ENCODE measurements at regions of chr16 and their contacts with region 1.

Region 1: DNA sequence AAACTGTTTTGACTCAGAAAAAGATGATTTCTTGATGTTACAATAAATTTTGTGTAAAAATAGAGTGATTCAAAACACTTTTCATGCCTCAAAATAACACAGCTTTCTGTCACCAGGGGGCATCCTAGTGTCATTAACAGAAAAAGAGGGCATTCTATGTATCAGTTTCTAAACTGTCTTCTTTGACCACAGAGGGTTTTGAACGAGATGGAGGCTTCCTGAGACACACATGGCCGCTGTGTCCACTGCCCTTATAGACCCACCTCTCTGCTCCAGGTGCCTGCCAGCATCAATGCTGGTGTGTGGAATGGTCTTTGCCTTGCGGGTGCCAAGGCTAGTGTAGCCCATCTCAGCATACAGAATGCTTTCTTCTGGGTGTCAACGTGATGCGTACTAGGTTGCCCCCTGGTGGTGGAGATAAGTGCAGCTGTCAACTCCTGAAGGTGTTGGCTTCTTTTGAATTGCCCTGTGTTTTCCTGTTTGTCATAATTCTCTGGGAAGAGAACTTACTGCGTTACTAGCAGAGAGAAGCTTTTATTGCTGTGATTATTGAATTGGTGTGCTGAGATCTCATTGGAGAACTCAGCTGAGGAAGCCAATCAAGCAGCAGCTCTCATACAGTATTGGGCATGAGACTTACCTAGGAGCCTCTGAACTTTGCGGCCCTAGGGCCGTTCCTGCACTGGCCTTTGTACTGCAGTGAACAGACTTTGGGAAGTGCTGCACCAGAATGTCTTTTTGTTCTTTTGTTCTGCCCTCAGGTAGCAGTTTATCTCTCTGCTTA is 38.6 kb downstream of the USP10 start:
- DNase-seq: peak; percentile 82
- H3K4me3 Mint-ChIP-seq: peak overlapping the region; percentile 6
- H3K27ac Mint-ChIP-seq: peak overlapping the region; percentile 63
- H3K4me1 Mint-ChIP-seq: peaks cover 48% of the 10 kb centered on the region
- H3K27me3 Mint-ChIP-seq: no peaks in the 10 kb centered on the region

Region 2: GRCh38 chr16:84663433-84664101 is 74.9 kb before region 1 on chr16:
- CTCF ChIA-PET with region 1: interaction called, 10 read pairs
- POLR2A ChIA-PET with region 1: no interaction called
- intact Hi-C with region 1: no loop called
- DNase-seq: no peak
- H3K4me3 Mint-ChIP-seq: no peak overlapping the region
- H3K27ac Mint-ChIP-seq: no peak overlapping the region
- H3K4me1 Mint-ChIP-seq: peaks cover 1% of the 10 kb centered on the region
- H3K27me3 Mint-ChIP-seq: no peaks in the 10 kb centered on the region

Region 3: GRCh38 chr16:84692451-84693214 is 45.8 kb before region 1 on chr16:
- CTCF ChIA-PET with region 1: interaction called, 10 read pairs
- POLR2A ChIA-PET with region 1: no interaction called
- intact Hi-C with region 1: no loop called
- DNase-seq: no peak
- H3K4me3 Mint-ChIP-seq: no peak overlapping the region
- H3K27ac Mint-ChIP-seq: no peak overlapping the region
- H3K4me1 Mint-ChIP-seq: peaks cover 1% of the 10 kb centered on the region
- H3K27me3 Mint-ChIP-seq: peaks cover 3% of the 10 kb centered on the region

Region 4: GRCh38 chr16:84754353-84754856 is 16.0 kb after region 1 on chr16:
- CTCF ChIA-PET with region 1: interaction called, 141 read pairs
- POLR2A ChIA-PET with region 1: no interaction called
- intact Hi-C with region 1: loop called (anchors 1 kb)
- DNase-seq: peak; percentile 65
- H3K4me3 Mint-ChIP-seq: peak overlapping the region; percentile 36
- H3K27ac Mint-ChIP-seq: no peak overlapping the region
- H3K4me1 Mint-ChIP-seq: peaks cover 87% of the 10 kb centered on the region
- H3K27me3 Mint-ChIP-seq: no peaks in the 10 kb centered on the region

Region 5: DNA sequence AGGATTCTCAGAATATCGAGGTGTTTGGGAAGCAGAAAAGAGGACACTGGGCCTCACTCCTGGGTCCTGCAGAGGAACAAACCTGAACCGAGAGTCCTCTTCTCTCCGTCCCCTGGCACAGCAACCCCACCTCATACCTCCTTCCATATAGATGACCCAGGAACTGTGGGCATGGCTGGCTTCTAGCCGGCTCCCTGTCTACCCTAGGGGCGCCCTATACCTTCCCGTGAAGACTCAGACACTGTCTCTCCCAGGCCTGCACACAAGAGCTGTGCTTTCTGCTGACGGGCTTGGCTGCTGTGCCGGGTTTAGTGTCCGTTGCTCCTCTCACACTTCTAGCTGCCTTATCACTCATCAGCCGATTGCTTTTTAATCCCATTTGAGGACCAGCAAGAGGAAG is 34.9 kb after region 1 on chr16:
- CTCF ChIA-PET with region 1: interaction called, 15 read pairs
- POLR2A ChIA-PET with region 1: no interaction called
- intact Hi-C with region 1: no loop called
- DNase-seq: no peak
- H3K4me3 Mint-ChIP-seq: no peak overlapping the region
- H3K27ac Mint-ChIP-seq: no peak overlapping the region
- H3K4me1 Mint-ChIP-seq: peaks cover 20% of the 10 kb centered on the region
- H3K27me3 Mint-ChIP-seq: no peaks in the 10 kb centered on the region

Region 6: GRCh38 chr16:84881702-84882521 is 143.5 kb after region 1 on chr16:
- CTCF ChIA-PET with region 1: no interaction called
- POLR2A ChIA-PET with region 1: no interaction called
- intact Hi-C with region 1: no loop called
- DNase-seq: no peak
- H3K4me3 Mint-ChIP-seq: no peak overlapping the region
- H3K27ac Mint-ChIP-seq: no peak overlapping the region
- H3K4me1 Mint-ChIP-seq: peaks cover 2% of the 10 kb centered on the region
- H3K27me3 Mint-ChIP-seq: no peaks in the 10 kb centered on the region

Region 7: DNA sequence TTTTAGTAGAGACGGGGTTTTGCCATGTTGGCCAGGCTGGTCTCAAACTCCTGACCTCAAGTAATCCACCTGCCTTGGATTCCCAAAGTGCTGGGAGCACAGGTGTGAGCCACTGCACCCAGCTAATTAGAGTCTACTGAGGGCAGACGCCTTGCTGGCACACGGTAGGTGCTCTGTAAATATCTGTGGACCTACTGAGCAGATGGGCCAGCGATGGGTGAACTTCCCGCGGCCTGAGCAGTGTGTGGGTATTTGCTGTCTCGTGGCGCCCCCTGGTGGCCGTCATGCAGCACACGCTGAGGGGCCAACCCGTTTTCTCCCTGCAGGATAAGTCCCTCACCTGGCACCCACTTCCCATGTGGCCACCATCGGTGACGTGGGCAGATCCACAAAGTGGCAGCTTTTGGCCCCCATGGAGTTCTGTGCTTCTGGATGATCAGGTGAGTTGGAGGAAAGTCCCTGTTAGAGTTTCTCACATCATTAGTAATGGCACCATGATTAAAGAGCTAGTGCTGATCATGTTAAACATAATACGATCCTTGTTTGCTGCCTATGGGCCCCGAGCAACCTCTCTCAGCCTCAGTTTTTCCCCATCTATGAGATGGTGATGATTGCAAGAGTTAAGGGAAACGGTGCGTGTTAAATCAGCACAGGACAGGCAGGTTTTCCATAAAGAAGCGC is 232.1 kb after region 1 on chr16:
- CTCF ChIA-PET with region 1: interaction called, 16 read pairs
- POLR2A ChIA-PET with region 1: no interaction called
- intact Hi-C with region 1: no loop called
- DNase-seq: peak; percentile 85
- H3K4me3 Mint-ChIP-seq: no peak overlapping the region
- H3K27ac Mint-ChIP-seq: no peak overlapping the region
- H3K4me1 Mint-ChIP-seq: no peaks in the 10 kb centered on the region
- H3K27me3 Mint-ChIP-seq: no peaks in the 10 kb centered on the region

Region 8: GRCh38 chr16:85262558-85263238 is 524.3 kb after region 1 on chr16:
- CTCF ChIA-PET with region 1: no interaction called
- POLR2A ChIA-PET with region 1: no interaction called
- intact Hi-C with region 1: no loop called
- DNase-seq: no peak
- H3K4me3 Mint-ChIP-seq: no peak overlapping the region
- H3K27ac Mint-ChIP-seq: no peak overlapping the region
- H3K4me1 Mint-ChIP-seq: no peaks in the 10 kb centered on the region
- H3K27me3 Mint-ChIP-seq: peaks cover 16% of the 10 kb centered on the region